ENCODE measurements at regions of chrX and their contacts with region 1.

Region 1: DNA sequence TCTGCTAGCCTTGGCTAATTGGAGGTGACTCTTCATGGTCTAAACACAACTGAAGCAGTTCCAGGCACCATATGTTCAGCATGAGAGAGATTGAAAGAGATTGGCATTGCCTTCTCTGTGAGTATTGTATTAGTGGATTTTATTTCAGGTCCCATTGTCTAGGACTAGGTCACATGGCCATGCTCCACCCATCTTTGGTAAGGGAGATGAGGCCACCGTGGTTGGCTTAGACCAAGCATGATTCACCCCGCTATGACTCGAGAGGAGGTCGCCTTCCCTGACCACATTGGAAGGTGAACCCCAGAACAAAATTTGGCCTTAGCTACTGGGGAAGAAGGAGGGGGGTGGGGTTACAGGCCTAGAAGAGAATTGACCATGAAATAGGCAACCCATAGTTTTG is 109.9 kb upstream of the BCOR start:
- H3K4me3 Mint-ChIP-seq: no peak overlapping the region
- H3K27ac Mint-ChIP-seq: no peak overlapping the region
- H3K4me1 Mint-ChIP-seq: peaks cover 19% of the 10 kb centered on the region
- H3K27me3 Mint-ChIP-seq: peaks cover 6% of the 10 kb centered on the region

Region 2: GRCh38 chrX:40169193-40170101 is 38.2 kb before region 1 on chrX:
- intact Hi-C with region 1: loop called (anchors 5 kb)
- H3K4me3 Mint-ChIP-seq: peak overlapping the region; percentile 49
- H3K27ac Mint-ChIP-seq: peak overlapping the region; percentile 73
- H3K4me1 Mint-ChIP-seq: peaks cover 46% of the 10 kb centered on the region
- H3K27me3 Mint-ChIP-seq: peaks cover 42% of the 10 kb centered on the region